Posterior cingulate gyrus (tissue), 11 donors: ENCODE measurements at regions of chr12 and their contacts with region 1.

Region 1: GRCh38 chr12:54993161-54993835 is 8.7 kb upstream of the TESPA1 start:
- DNase-seq: peak in 5 of 10 donors; percentile 11 to 62 (median 46)

Region 2: DNA sequence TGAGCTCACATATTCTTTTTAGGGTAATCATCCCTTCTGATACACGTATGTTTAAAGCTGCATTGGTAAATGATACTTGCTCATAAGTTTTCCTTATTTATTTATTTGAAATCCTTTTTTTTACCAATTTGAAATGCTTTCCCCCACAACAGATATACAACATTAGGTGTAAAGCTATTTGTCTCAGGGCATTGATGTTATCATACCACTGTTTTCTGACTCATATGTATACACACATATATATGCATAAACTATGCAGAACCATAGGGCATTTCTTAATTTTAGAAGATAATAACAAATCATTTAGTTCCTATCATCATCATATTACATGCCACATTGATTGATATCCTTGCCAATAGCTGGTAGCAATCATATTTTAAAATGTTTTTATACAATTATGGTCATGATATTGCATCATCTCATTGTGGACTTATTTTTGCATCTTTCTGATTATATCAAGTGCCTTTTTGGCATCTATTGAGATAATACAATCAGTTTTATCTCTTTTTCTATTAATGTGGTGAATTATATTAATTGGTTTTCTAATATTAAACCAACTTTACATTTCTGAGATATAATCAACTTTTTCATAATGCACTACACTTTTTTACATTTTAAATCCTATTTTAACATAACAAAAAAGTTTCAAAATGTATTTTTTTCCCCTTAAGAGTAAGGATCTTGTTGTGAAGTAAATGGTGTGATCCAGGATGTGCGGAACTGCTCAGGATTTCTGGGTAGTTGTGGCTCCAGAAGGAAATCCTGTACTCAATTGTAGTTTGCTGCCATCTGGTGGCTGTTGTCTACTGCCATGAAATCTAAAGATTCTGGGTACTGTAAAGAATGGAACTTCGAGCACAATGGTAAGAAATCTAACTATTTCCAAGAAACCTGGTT is 149.6 kb after region 1 on chr12:
- intact Hi-C with region 1: loop called (anchors 1 kb)
- DNase-seq: peak in 5 of 10 donors; percentile 32 to 62 (median 35)